H1 (cell line): ENCODE measurements at regions of chr1 and their contacts with region 1.

Region 1: DNA sequence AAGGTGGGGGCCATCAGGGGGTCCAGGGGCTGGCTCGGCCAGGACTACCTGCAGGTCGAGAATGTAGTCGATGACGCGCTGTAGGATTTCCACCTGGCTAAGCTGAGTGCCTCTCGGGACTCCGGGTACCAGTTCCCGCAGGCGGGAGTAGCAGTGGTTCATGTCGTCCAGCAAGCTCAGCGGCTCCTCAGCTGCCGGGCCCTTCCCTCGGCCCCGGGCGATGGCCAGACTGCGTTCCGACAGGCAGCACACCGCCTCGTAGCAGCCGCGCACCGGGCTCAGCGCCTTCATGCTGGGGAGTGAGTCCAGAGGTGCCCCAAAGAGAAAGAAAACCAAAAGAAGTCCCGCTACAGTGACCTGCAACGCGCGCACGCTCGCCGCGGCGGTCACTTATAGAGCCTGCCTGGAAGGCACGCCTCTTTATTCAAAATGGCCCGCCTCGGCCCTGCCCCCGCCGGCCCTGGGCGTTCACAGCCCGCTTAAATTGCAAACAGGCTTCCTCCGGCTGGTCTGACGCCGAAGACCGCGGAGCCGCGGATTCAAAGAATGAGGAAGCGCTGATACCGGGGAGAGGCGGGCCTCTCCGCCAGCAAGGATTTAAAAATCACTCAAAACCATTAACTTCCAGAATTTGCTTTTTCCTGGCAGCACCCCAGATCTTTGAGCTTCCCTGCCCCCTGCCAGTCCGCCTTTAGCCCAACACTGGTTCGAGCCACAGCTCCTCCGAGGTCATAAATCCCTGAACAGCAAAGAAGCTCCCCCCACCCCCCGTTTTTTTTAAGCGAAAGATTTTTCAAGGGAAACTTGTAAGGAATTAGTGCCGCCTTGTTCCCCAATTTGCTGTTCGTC is at the start of gene ID3:
- DNase-seq: peak; percentile 78 to 96
- H3K4me3 ChIP-seq: peak within 1 kb of the TSS; percentile 66 to 98 (median 94)
- H3K27ac ChIP-seq: peak within 1 kb of the TSS; percentile 64
- H3K4me1 ChIP-seq: peaks cover 22 to 36% (median 27%) of the 10 kb centered on the region in 4 experiments
- H3K27me3 ChIP-seq: peaks cover 0 to 4% (median 0%) of the 10 kb centered on the region in 4 experiments; a peak in 2 of 7 replicates
- CTCF ChIP-seq: no peak
- EP300 ChIP-seq: no peak; a peak in 1 of 3 replicates
- POLR2A ChIP-seq: peak; percentile 96 to 97
- RAD21 ChIP-seq: no peak; a peak in 1 of 4 replicates
- total RNA-seq, gene ID3: 240 and 252 TPM in 2 replicates

Region 2: DNA sequence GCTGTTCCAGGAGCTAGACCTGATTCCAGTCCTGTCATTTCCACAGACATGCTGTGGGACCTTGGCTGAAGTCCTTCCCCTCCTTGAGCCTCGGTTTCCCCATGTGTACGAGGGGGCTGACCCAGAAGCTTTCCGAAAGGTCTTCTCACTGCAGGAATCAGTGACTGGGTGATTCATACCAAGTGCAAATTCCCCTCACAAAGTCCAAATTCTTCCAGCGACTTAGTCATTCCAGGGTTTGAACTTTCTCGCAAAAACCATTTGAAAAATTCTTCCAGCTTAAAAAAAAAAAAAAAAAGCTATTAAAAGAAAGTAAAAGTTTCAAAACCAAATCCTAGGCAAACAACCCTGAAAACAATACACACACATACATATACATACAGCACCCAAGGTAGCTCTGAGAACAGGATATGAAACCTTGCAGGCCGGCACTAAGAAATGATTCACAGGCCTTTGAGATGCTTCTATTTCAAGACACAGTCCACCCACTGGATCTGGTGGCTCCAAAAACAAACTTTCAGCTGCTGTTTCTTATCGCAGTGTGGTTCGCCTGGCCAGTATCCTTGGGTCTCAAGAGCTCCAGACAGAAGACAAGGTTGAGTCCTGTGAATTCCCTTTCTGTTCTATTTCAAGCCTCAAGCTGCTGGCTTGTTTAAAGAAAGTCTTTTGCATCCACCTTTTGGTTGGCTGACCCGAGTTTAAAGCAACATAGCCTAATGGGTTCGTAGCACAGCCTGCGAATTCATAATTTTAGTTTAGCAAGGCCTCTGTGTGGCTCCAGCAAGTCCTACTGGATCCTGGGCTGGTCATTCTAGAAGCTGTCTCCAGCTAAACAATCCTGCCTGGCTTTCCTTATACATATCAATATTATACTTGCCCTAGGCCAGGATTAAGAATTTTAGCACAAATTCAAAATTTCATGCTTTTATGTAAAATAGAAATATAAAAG is 18.0 kb after region 1 on chr1:
- CTCF ChIA-PET with region 1: interaction called, 18 read pairs
- POLR2A ChIA-PET with region 1: interaction called, 283 read pairs
- DNase-seq: no peak
- H3K4me3 ChIP-seq: no peak overlapping the region
- H3K27ac ChIP-seq: no peak overlapping the region
- H3K4me1 ChIP-seq: peaks cover 2 to 6% (median 3%) of the 10 kb centered on the region in 4 experiments; a peak in 4 of 7 replicates
- H3K27me3 ChIP-seq: no peaks in the 10 kb centered on the region
- CTCF ChIP-seq: no peak
- EP300 ChIP-seq: no peak
- POLR2A ChIP-seq: no peak
- RAD21 ChIP-seq: no peak

Region 3: GRCh38 chr1:23598424-23598823 is 39.1 kb after region 1 on chr1:
- CTCF ChIA-PET with region 1: interaction called, 14 read pairs
- POLR2A ChIA-PET with region 1: interaction called, 547 read pairs
- DNase-seq: peak; percentile 86
- H3K4me3 ChIP-seq: peak overlapping the region in 1 of 4 experiments; percentile 6; a peak in 3 of 8 replicates
- H3K27ac ChIP-seq: peak overlapping the region; percentile 48; the same call in 1 of the 2 replicates
- H3K4me1 ChIP-seq: peaks cover 16 to 43% (median 18%) of the 10 kb centered on the region in 4 experiments
- H3K27me3 ChIP-seq: no peaks in the 10 kb centered on the region; a peak in 1 of 7 replicates
- CTCF ChIP-seq: peak in 1 of 3 experiments; percentile 13; a peak in 1 of 4 replicates
- EP300 ChIP-seq: peak in 1 of 2 experiments; percentile 92; a peak in 2 of 3 replicates
- POLR2A ChIP-seq: no peak
- RAD21 ChIP-seq: peak in 1 of 2 experiments; percentile 28; a peak in 2 of 4 replicates

Region 4: DNA sequence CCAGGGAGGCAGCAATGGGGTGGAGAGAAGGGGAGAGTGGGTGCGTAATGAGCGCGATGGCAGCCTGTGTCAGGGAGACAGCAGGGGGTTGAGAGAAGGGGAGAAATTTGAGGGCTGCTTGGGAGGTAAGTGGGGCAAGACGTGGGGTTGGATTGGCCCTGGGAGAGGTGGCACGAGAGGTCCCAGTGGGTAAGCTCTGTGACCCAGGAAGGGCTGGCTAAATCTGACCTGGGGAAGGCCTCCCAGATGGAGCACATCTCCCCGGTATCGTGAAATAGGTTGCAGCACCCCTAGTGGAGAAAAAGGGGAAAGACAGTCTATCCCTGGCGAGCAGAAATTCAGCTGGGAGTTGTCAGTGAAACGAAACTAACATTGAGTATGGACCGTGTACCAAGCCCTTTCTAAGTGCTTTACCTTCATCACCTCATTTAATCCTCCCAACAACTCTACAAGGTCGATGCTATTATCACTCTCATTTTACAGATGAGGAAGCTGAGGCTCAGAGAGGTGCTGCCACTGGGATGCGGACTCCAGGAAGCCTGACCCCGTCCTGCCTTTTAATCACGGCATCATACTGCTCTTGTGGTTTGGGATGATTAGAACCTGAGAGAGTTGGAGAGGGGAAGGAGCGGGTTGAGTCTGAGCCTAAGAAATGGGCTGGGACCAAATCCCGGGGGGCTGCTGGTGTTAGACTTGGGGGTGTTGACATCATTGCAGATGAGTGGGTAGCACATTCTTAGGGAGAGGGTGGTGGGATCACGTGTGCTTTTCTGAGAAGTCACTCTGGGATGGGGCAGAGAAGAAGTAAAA is 75.7 kb after region 1 on chr1:
- CTCF ChIA-PET with region 1: interaction called, 706 read pairs
- POLR2A ChIA-PET with region 1: interaction called, 155 read pairs
- DNase-seq: peak in 1 of 2 experiments; percentile 71
- H3K4me3 ChIP-seq: no peak overlapping the region
- H3K27ac ChIP-seq: no peak overlapping the region
- H3K4me1 ChIP-seq: peaks cover 0 to 17% (median under 1%) of the 10 kb centered on the region in 4 experiments; a peak in 5 of 7 replicates
- H3K27me3 ChIP-seq: no peaks in the 10 kb centered on the region
- CTCF ChIP-seq: peak; percentile 60 to 97 (median 74)
- EP300 ChIP-seq: no peak
- POLR2A ChIP-seq: no peak
- RAD21 ChIP-seq: peak; percentile 74 to 85

Region 5: GRCh38 chr1:23691499-23692307 is 132.3 kb after region 1 on chr1 and contains the start of gene RPL11:
- CTCF ChIA-PET with region 1: interaction called, 3 read pairs
- POLR2A ChIA-PET with region 1: interaction called, 47 read pairs
- DNase-seq: peak; percentile 84 to 88
- H3K4me3 ChIP-seq: peak within 1 kb of the TSS; percentile 82 to 100 (median 92)
- H3K27ac ChIP-seq: peak within 1 kb of the TSS; percentile 93
- H3K4me1 ChIP-seq: peaks cover 0 to 13% (median 6%) of the 10 kb centered on the region in 4 experiments; a peak in 4 of 7 replicates
- H3K27me3 ChIP-seq: no peaks in the 10 kb centered on the region
- CTCF ChIP-seq: peak; percentile 67 to 77 (median 76)
- EP300 ChIP-seq: no peak
- POLR2A ChIP-seq: peak; percentile 97 to 99
- RAD21 ChIP-seq: no peak
- total RNA-seq, gene RPL11: 1,426 and 1,499 TPM in 2 replicates